ENCODE measurements at regions of chr3 and their contacts with region 1.

Region 1: GRCh38 chr3:21314688-21315087 is 436.3 kb downstream of the ZNF385D start:
- DNase-seq: no peak
- H3K27ac ChIP-seq: no peak overlapping the region
- CTCF ChIP-seq: no peak

Region 2: GRCh38 chr3:22659651-22660475 is 1345.2 kb after region 1 on chr3:
- CTCF ChIA-PET with region 1: interaction called, 10 read pairs
- POLR2A ChIA-PET with region 1: no interaction called
- DNase-seq: no peak
- H3K27ac ChIP-seq: no peak overlapping the region
- CTCF ChIP-seq: no peak